GM10248 (cell line): ENCODE measurements at regions of chr5 and their contacts with region 1.

Region 1: GRCh38 chr5:160021831-160022446 is 13.0 kb downstream of the TTC1 start:
- DNase-seq: peak; percentile 59
- CTCF ChIP-seq: peak; percentile 69

Region 2: DNA sequence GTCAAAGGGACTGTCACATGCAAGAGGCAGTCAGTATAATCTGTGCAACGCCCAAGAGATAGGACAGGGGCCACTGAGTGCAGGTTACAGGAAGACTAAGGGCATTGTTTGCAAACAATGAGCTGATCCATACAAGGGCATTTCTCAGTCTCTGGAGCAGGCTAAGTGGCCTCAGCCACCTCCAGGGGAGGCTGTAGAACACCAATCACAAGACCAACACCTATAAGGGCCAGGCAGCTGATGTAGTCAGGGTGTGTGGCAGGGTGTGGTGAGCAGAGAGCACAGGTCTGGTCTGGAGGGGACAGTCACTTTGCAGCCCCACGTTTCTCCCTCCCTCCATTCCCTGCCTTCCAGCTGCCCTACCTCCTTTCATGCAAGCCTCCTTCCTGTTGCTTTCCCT is 188.9 kb before region 1 on chr5:
- CTCF ChIA-PET with region 1: no interaction called
- POLR2A ChIA-PET with region 1: no interaction called
- DNase-seq: no peak
- CTCF ChIP-seq: no peak

Region 3: GRCh38 chr5:160008877-160009590 is 12.9 kb before region 1 on chr5 and contains the start of gene TTC1:
- CTCF ChIA-PET with region 1: interaction called, 59 read pairs
- POLR2A ChIA-PET with region 1: interaction called, 3 read pairs
- DNase-seq: peak; percentile 93
- CTCF ChIP-seq: no peak

Region 4: GRCh38 chr5:160048131-160048530 is 26.2 kb after region 1 on chr5:
- CTCF ChIA-PET with region 1: interaction called, 11 read pairs
- POLR2A ChIA-PET with region 1: no interaction called
- DNase-seq: no peak
- CTCF ChIP-seq: no peak

Region 5: DNA sequence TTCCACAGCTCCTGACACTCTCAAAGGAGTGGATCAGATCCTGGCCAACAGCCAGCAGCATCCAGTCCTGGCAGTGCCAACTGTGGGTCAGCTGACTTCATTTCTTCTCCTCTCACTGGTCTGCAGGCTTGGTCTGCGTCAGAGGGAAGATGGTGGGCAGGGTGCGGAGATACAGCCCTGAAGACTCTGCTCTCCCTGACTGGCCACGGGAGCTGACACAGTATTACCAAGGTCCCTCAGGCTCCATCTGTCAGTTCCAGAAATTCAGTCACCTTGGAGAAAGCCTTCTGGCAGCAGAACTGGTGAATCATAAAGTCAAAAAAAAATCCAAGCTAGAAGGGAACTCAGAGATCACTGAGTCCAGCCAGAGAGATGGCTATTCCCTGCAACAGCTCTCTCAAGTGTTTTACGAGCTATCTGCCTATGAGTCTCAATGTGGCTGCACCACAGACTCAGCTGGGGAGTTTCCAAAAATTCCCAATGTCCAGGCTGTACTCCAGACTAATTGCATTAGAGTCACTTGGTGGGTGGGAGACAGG is 320.5 kb after region 1 on chr5:
- CTCF ChIA-PET with region 1: interaction called, 73 read pairs
- POLR2A ChIA-PET with region 1: no interaction called
- DNase-seq: no peak
- CTCF ChIP-seq: no peak

Region 6: DNA sequence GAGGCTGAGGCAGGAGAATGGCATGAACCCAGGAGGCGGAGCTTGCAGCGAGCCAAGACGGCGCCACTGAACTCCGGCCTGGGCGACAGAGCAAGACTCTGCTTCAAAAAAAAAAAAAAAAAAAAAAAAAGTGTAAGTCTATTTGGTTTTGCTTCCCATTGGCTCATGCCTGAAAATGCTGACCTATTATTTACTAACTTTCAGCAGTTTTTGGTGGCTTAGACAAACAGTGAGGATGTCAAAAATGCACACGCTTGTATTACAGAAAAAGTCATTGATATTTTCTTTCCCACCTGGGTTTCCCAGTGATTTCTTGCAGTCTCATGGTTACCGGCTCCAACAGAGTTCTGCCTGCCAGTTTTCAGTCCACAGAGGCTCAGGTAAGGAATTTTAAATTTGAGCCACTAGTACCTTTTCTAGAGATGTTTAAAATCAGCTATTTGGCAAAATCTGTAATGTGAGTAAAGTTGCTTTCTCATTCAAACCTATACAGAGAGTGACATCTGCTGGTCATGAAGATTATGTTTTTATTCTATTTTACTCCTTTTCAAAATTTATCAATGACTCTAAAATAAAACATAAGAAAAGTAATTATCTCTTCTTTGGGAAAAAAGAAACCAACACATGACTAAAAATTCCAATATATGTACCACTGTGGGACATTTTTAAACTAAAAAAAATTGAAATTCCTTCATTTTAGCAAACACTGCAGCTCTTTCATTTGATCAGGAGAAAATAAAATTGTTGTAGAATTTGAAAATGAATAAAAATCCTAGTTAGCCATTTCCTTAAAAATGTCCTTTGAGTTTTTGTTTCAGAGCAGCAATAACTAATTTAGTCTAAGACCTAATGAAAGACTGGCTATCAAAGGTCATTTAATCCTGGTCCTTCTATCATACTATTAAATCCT is 369.1 kb after region 1 on chr5:
- CTCF ChIA-PET with region 1: interaction called, 15 read pairs
- POLR2A ChIA-PET with region 1: no interaction called
- DNase-seq: peak; percentile 32
- CTCF ChIP-seq: peak; percentile 41